ENCODE measurements at regions of chr9 and their contacts with region 1.

Region 1: GRCh38 chr9:121545875-121546423 is 46.3 kb upstream of the GGTA1 start:
- DNase-seq: peak; percentile 82 to 97
- H3K4me3 ChIP-seq: no peak overlapping the region
- H3K27ac ChIP-seq: no peak overlapping the region
- H3K4me1 ChIP-seq: peaks cover 9% of the 10 kb centered on the region
- H3K27me3 ChIP-seq: no peaks in the 10 kb centered on the region
- CTCF ChIP-seq: peak; percentile 95

Region 2: DNA sequence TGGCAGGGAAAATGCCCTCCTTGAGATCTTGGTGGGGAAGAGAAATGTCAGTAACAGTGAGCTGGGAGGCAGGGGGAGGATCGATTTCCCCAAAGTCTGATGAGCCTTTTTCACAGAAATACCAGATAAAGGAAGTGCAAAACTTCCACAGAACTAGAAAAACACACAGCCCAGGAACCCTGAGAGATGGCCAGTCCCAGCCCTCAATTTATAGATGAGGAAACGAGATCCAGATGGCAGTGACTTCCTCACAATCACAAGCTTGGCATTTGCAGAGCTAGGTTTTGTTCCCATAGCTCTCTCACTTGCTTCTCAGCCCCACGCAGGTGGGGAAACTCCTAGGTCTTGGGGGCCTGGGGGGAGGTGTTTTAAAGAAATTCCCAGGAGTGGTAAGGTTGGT is 42.5 kb before region 1 on chr9:
- CTCF ChIA-PET with region 1: no interaction called
- POLR2A ChIA-PET with region 1: no interaction called
- intact Hi-C with region 1: no loop called
- DNase-seq: no peak
- H3K4me3 ChIP-seq: no peak overlapping the region
- H3K27ac ChIP-seq: no peak overlapping the region
- H3K4me1 ChIP-seq: peaks cover 15% of the 10 kb centered on the region
- H3K27me3 ChIP-seq: peaks cover 29% of the 10 kb centered on the region
- CTCF ChIP-seq: no peak

Region 3: DNA sequence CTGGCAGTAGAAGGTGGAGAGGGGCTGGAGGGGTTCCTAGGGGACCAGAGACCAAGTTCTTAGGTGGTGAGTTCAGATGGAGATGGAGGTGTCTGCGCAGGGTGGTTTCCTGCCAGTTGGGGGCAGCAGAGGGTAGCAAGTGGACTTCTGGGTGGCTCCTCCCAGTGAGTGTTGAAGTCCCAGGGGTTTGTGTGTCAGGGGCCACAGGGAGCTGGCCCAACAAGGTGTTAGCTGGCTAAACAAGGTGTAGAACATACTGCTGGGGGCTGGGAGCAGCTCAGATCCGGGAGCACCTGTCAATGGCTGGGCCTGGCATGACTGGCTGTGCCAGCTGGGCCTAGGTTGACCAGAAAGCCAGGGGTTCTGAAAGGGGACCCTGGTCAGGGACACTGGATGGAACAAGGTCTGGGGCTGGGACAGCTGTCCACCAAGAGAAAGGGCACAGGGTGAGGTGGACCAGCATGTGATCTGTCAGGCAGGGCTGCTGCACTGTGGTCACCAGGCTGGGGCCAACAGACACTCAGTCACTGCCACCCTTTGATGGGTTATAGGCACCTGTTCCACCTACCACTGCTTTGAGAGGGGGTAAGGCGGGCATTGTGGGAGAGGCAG is 141.1 kb after region 1 on chr9:
- CTCF ChIA-PET with region 1: interaction called, 10 read pairs
- POLR2A ChIA-PET with region 1: no interaction called
- intact Hi-C with region 1: loop called (anchors 1 kb)
- DNase-seq: peak; percentile 78 to 87
- H3K4me3 ChIP-seq: no peak overlapping the region
- H3K27ac ChIP-seq: no peak overlapping the region
- H3K4me1 ChIP-seq: peaks cover 9% of the 10 kb centered on the region
- H3K27me3 ChIP-seq: no peaks in the 10 kb centered on the region
- CTCF ChIP-seq: peak; percentile 93

Region 4: GRCh38 chr9:121744002-121744686 is 198.2 kb after region 1 on chr9:
- CTCF ChIA-PET with region 1: interaction called, 21 read pairs
- POLR2A ChIA-PET with region 1: no interaction called
- intact Hi-C with region 1: loop called (anchors 5 kb)
- DNase-seq: peak in 1 of 2 experiments; percentile 67
- H3K4me3 ChIP-seq: peak overlapping the region; percentile 42; the same call in 1 of the 2 replicates
- H3K27ac ChIP-seq: no peak overlapping the region
- H3K4me1 ChIP-seq: peaks cover 50% of the 10 kb centered on the region
- H3K27me3 ChIP-seq: no peaks in the 10 kb centered on the region
- CTCF ChIP-seq: peak; percentile 56; the same call in 1 of the 2 replicates

Region 5: GRCh38 chr9:121992571-121993212 is 446.7 kb after region 1 on chr9:
- CTCF ChIA-PET with region 1: interaction called, 8 read pairs
- POLR2A ChIA-PET with region 1: no interaction called
- intact Hi-C with region 1: loop called (anchors 1 kb)
- DNase-seq: peak; percentile 55
- H3K4me3 ChIP-seq: no peak overlapping the region
- H3K27ac ChIP-seq: no peak overlapping the region
- H3K4me1 ChIP-seq: no peaks in the 10 kb centered on the region
- H3K27me3 ChIP-seq: no peaks in the 10 kb centered on the region
- CTCF ChIP-seq: peak; percentile 88

Region 6: DNA sequence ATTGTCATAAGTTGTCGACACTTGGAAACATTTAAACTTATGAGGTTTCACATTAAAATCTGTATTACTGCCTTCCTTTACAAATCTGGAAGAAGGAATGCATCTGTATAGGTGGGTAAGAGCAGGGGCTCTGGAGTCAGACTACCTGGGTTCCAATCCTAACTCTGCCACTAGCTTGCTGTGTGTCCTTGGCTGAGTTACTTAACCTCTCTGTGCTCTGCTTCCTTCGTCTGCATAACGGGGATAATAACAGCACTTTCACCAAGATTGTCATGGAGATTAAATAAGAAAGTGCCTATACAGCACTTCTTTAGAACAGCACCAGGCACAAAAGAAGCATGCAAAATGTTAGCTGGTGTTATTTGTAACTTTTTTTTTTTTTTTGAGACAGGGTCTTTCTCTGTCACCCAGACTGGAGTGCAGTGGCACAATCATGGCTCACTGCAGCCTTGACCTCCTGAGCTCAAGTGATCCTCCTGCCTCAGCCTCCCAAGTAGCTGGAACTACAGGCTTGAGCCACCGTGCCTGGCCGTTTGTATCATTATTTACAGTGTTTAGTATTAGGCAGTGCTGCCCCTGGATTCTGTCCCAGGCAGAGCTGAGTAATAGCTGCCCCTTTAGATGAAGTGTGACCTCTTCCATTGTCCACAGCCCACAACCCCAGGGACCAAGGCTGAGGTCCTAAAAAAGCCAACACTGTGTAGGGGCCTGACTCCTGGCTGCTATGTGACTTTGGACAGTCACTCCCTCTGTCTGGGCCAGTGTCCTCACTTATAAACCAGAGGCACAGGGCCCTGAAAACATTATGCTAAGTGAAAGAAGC is 572.6 kb after region 1 on chr9:
- CTCF ChIA-PET with region 1: interaction called, 10 read pairs
- POLR2A ChIA-PET with region 1: no interaction called
- intact Hi-C with region 1: no loop called
- DNase-seq: no peak
- H3K4me3 ChIP-seq: no peak overlapping the region
- H3K27ac ChIP-seq: no peak overlapping the region
- H3K4me1 ChIP-seq: no peaks in the 10 kb centered on the region
- H3K27me3 ChIP-seq: peaks cover 20% of the 10 kb centered on the region
- CTCF ChIP-seq: no peak

Region 7: DNA sequence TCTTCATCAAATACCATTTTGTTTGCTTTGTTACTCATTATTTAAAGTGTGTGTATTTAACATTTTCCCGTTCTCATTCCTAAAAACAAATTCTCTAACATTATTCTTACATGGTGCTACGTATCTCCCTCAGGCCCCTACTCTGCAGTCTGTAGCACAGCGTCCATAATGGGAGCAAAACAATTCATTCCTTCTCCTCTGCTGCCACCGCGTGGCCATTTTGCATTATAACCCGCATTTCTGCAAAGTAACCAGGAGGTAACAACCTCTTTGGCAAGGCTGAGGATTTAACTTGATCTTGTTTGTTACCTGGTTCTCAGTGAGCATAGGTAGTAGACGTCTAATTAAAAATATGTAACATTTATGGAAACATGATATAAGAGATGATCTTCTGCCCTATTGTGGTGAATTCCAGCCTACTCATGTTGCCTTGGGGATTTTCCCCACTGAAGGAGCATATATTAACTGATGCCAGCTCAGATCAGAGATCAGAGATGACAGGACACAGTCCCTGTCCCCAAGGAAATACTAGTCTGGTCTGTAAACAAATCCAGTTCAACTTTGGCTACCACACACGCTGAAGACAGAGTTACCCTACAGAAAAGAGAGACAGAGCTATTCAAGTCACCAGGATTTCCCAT is 1264.5 kb after region 1 on chr9:
- CTCF ChIA-PET with region 1: no interaction called
- POLR2A ChIA-PET with region 1: no interaction called
- intact Hi-C with region 1: loop called (anchors 10 kb)
- DNase-seq: peak; percentile 49 to 67
- H3K4me3 ChIP-seq: no peak overlapping the region
- H3K27ac ChIP-seq: no peak overlapping the region
- H3K4me1 ChIP-seq: peaks cover 10% of the 10 kb centered on the region
- H3K27me3 ChIP-seq: no peaks in the 10 kb centered on the region
- CTCF ChIP-seq: peak; percentile 91

Measured in PC-9 (cell line).